Posterior vena cava (tissue), 2 donors: ENCODE measurements at regions of chr15 and their contacts with region 1.

Region 1: DNA sequence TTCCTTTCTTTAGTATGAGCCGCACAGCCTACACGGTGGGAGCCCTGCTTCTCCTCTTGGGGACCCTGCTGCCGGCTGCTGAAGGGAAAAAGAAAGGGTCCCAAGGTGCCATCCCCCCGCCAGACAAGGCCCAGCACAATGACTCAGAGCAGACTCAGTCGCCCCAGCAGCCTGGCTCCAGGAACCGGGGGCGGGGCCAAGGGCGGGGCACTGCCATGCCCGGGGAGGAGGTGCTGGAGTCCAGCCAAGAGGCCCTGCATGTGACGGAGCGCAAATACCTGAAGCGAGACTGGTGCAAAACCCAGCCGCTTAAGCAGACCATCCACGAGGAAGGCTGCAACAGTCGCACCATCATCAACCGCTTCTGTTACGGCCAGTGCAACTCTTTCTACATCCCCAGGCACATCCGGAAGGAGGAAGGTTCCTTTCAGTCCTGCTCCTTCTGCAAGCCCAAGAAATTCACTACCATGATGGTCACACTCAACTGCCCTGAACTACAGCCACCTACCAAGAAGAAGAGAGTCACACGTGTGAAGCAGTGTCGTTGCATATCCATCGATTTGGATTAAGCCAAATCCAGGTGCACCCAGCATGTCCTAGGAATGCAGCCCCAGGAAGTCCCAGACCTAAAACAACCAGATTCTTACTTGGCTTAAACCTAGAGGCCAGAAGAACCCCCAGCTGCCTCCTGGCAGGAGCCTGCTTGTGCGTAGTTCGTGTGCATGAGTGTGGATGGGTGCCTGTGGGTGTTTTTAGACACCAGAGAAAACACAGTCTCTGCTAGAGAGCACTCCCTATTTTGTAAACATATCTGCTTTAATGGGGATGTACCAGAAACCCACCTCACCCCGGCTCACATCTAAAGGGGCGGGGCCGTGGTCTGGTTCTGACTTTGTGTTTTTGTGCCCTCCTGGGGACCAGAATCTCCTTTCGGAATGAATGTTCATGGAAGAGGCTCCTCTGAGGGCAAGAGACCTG is 13.2 kb downstream of the GREM1 start:
- DNase-seq: peak; percentile 70

Region 2: DNA sequence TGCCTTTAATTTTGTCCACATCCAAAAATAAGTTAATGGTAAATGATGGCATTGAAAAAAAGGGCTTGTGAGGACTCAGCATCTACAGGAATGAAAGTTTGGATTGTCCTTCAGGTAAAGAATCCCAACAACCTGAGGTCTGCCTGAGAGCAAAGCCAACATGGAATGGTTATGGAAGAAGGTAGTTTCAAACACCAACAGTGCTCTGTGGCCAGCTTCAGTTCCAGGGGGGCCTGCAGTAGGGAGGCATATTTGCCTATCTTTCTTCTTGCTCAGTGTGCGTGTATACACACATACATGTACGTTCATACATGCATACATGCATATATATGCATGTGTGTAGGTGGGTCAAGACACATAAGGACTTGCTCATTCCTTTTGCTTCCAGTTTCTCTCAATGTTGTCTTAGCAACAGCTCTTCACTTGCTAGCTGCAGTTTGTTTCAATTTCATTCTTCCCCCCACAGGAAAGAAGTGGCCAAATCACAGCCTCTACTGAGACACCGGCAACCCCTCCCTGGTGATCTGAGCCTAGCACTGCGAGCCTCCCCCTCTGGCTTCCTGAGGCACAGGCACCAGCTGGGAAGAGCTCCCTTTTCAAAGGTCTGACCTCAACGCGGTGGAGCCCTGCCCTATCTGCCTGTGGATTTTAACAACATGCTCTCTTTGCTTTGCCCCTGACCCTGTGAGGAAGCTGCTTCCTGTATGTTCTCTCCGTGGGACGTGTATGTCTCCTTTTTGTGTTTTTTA is 1258.2 kb before region 1 on chr15:
- intact Hi-C with region 1: no loop called
- DNase-seq: peak; percentile 16

Region 3: DNA sequence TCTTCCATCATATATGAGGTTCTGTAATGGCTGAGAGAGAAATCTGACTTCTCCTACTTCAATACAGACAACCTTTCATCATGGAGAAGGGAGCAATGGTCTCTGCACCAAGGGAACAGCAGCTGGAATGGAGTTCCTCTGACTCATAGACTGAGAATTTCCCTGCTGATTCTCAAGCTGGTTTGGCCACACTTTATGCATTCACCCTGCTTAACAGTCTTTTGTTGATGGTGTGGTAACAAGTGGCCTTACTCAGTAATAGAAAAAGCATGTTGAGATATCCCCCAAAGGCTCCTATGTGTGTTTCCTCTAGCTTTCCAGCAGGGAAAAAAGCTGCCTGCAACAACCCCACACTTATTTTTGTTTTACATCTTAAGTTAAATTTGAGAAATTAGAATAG is 125.0 kb after region 1 on chr15:
- intact Hi-C with region 1: loop called in 1 of 2 experiments (anchors 10 kb)
- DNase-seq: no peak

Region 4: GRCh38 chr15:32884146-32884545 is 153.2 kb after region 1 on chr15:
- intact Hi-C with region 1: no loop called
- DNase-seq: no peak